Adrenal gland (tissue), 19 donors: ENCODE measurements at regions of chr10 and their contacts with region 1.

Region 1: DNA sequence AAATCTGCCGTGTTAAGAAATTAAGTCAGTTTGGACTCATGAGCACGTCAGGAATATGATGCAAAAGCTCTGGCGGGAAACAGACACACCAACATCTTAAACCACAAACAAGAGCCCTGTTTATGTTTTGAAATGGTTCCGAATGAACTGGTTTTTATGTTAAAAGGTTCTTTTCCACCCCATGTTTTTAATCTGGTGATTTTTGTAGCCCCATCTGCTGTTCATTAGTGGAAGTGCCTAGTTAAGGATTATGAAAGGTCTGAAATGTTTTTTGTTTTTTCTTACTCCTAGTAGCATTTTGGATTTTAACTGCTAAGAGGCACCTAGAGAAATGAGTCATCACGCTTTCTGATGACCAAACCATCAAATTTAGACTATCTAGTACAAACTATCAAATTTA is 404.1 kb upstream of the MKI67 start:
- DNase-seq: no peak
- H3K4me3 ChIP-seq: no peak overlapping the region
- H3K27ac ChIP-seq: no peak overlapping the region
- H3K4me1 ChIP-seq: no peaks in the 10 kb centered on the region
- H3K27me3 ChIP-seq: peaks cover 6% of the 10 kb centered on the region
- CTCF ChIP-seq: peak in 5 of 6 experiments; percentile 25 to 50 (median 34)
- POLR2A ChIP-seq: no peak

Region 2: GRCh38 chr10:128263891-128264688 is 266.2 kb before region 1 on chr10:
- intact Hi-C with region 1: loop called in 1 of 2 experiments (anchors 10 kb)
- DNase-seq: peak; percentile 53 to 84 (median 67)
- H3K4me3 ChIP-seq: no peak overlapping the region
- H3K27ac ChIP-seq: no peak overlapping the region
- H3K4me1 ChIP-seq: no peaks in the 10 kb centered on the region
- H3K27me3 ChIP-seq: peaks cover 48% of the 10 kb centered on the region
- CTCF ChIP-seq: peak; percentile 16 to 62 (median 46)
- POLR2A ChIP-seq: no peak

Region 3: DNA sequence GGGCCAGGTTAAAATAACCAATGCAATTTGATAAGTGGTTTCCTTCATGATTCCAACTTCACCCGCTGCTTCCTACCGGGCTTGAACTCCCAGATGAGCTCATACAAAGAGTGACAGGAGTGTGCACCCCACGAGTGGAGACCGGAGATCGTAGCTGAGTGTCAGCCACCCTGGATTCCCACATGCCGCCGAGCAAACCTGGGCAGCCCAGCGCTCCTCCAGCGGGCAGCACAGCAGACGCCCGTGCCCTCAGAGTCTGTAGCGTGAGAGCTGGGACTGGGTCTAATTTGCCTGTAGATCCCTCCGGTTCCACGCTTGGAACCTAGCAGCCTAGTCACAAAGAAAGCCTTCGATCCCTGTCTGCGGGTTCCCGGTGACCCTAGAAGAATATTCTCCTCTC is 460.7 kb after region 1 on chr10:
- intact Hi-C with region 1: no loop called
- DNase-seq: no peak
- H3K4me3 ChIP-seq: no peak overlapping the region
- H3K27ac ChIP-seq: no peak overlapping the region
- H3K4me1 ChIP-seq: no peaks in the 10 kb centered on the region
- H3K27me3 ChIP-seq: peaks cover 4% of the 10 kb centered on the region
- CTCF ChIP-seq: no peak
- POLR2A ChIP-seq: no peak